ENCODE measurements at regions of chr20 and their contacts with region 1.

Region 1: GRCh38 chr20:59751056-59751688 is 146.8 kb downstream of the PHACTR3 start:
- DNase-seq: peak; percentile 67
- H3K4me3 ChIP-seq: no peak overlapping the region
- H3K27ac ChIP-seq: no peak overlapping the region
- H3K4me1 ChIP-seq: peaks cover 0 to 10% (median 5%) of the 10 kb centered on the region in 4 donors
- H3K27me3 ChIP-seq: peaks cover 17% of the 10 kb centered on the region
- CTCF ChIP-seq: peak; percentile 59 to 75 (median 71)
- EP300 ChIP-seq: no peak
- POLR2A ChIP-seq: no peak

Region 2: DNA sequence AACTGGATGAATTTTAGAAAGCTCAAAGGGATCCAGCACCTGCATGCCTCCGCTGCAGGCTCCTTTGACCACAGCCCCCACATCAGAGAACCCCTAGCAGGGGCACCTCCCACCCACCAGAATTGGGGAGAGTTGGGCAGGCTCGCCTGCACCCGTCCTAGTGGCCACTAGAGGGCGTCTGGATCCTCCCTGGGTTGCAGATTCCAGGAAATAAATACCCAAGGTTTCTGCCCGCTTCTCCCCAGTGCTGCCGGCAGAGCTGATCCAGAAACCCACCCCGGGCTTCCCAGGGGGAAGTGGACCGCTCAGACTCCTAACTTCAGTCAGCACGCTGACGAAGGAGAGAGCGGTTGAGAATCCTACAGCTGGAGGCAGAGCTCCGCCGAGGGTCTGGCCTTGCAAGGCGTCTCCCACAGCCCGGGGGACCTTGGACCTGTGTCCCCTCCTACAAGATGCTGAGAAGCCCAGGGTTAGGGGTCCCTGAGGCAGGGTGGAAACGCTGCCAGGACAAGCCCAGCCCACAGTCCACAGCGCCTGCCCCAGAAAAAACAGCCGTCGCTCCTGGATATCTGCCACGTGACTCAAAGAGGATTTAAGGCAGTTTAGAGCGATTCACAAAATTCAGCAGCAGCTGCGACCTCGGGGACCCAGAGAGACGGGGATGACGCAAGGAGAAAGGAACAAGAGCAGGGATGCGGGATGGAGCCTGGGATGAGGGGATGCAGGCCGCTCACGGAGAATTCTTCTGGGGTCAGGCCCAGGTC is 179.4 kb before region 1 on chr20:
- in situ Hi-C with region 1: loop called in 2 of 4 experiments (anchors 10 to 25 kb)
- intact Hi-C with region 1: no loop called
- DNase-seq: peak; percentile 59
- H3K4me3 ChIP-seq: peak overlapping the region in 3 of 4 donors; percentile 16 to 48 (median 24)
- H3K27ac ChIP-seq: peak overlapping the region; percentile 34 to 66 (median 51)
- H3K4me1 ChIP-seq: peaks cover 0 to 11% (median 6%) of the 10 kb centered on the region in 4 donors
- H3K27me3 ChIP-seq: peaks cover 24% of the 10 kb centered on the region
- CTCF ChIP-seq: peak; percentile 70 to 97 (median 94)
- EP300 ChIP-seq: no peak
- POLR2A ChIP-seq: no peak

Region 3: GRCh38 chr20:59598625-59599310 is 152.4 kb before region 1 on chr20:
- in situ Hi-C with region 1: loop called in 3 of 4 experiments (anchors 10 to 25 kb)
- intact Hi-C with region 1: no loop called
- DNase-seq: peak; percentile 23
- H3K4me3 ChIP-seq: no peak overlapping the region
- H3K27ac ChIP-seq: no peak overlapping the region
- H3K4me1 ChIP-seq: no peaks in the 10 kb centered on the region
- H3K27me3 ChIP-seq: peaks cover 36% of the 10 kb centered on the region
- CTCF ChIP-seq: peak; percentile 50 to 74 (median 67)
- EP300 ChIP-seq: no peak
- POLR2A ChIP-seq: no peak

Region 4: GRCh38 chr20:60408435-60408834 is 657.3 kb after region 1 on chr20:
- in situ Hi-C with region 1: no loop called
- intact Hi-C with region 1: no loop called
- DNase-seq: no peak
- H3K4me3 ChIP-seq: no peak overlapping the region
- H3K27ac ChIP-seq: no peak overlapping the region
- H3K4me1 ChIP-seq: no peaks in the 10 kb centered on the region
- H3K27me3 ChIP-seq: no peaks in the 10 kb centered on the region
- CTCF ChIP-seq: no peak
- EP300 ChIP-seq: no peak
- POLR2A ChIP-seq: no peak

Region 5: DNA sequence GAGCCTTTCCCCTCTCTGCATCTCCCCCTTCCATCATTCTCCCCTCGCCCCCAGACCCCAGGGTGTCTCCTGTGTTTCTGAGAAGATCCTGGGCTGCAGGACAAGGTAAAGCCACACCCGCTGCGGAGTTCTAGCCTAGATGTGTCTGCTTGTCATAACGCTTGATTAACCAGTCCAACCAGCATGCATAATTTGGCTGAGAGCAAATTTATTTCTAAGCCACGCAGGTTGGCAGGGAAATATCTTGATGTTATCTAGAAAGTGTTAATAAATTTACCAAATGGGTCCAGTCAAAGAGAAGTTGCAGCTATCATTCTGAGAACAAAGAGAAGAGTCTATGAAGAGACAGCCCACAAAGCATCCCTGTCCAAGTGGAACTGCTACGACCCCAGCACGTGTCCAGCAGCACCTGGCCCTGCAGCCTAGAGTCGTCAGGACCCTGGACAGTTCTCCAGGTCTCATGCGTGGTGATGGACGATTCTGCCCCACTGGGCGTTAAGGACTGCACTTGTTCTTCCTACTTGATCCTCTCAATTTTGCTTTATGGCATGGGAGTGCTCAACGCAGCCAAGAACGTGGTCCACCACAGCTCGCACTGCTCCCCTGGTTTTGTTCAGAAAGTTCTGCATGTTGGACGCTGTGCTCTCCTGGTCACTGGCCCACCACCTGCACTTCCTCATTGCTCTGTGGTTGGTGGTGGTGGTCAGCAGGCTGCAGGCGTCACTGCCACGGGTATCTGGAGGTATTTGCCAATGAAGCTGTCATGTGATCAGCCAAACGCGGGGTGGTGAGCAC is 1857.1 kb after region 1 on chr20:
- in situ Hi-C with region 1: no loop called
- intact Hi-C with region 1: no loop called
- DNase-seq: no peak
- H3K4me3 ChIP-seq: no peak overlapping the region
- H3K27ac ChIP-seq: no peak overlapping the region
- H3K4me1 ChIP-seq: no peaks in the 10 kb centered on the region
- H3K27me3 ChIP-seq: peaks cover 5% of the 10 kb centered on the region
- CTCF ChIP-seq: no peak
- EP300 ChIP-seq: no peak
- POLR2A ChIP-seq: no peak

Measured in transverse colon (tissue), 4 donors.